ENCODE measurements at regions of chr17 and their contacts with region 1.

Region 1: GRCh38 chr17:82297714-82298537 is 19.5 kb downstream of the CD7 start:
- DNase-seq: peak; percentile 71 to 90
- ATAC-seq: peak; percentile 62 to 65
- H3K4me3 ChIP-seq: peak overlapping the region; percentile 49 to 62 (median 56)
- H3K27ac ChIP-seq: peak overlapping the region; percentile 84 to 98 (median 93)
- H3K4me1 ChIP-seq: peaks cover 40 to 44% of the 10 kb centered on the region in 2 donors
- H3K27me3 ChIP-seq: no peaks in the 10 kb centered on the region
- CTCF ChIP-seq: peak in 1 of 5 experiments; percentile 7
- POLR2A ChIP-seq: peak; percentile 75 to 76

Region 2: GRCh38 chr17:81941790-81942553 is 356.0 kb before region 1 on chr17:
- in situ Hi-C with region 1: no loop called
- intact Hi-C with region 1: loop called (anchors 5 kb)
- DNase-seq: peak; percentile 73 to 93
- ATAC-seq: peak; percentile 69 to 71
- H3K4me3 ChIP-seq: peak overlapping the region; percentile 44 to 56 (median 48)
- H3K27ac ChIP-seq: peak overlapping the region; percentile 90 to 98 (median 94)
- H3K4me1 ChIP-seq: peaks cover 26 to 44% of the 10 kb centered on the region in 2 donors
- H3K27me3 ChIP-seq: no peaks in the 10 kb centered on the region
- CTCF ChIP-seq: no peak
- POLR2A ChIP-seq: peak; percentile 86 to 90

Region 3: DNA sequence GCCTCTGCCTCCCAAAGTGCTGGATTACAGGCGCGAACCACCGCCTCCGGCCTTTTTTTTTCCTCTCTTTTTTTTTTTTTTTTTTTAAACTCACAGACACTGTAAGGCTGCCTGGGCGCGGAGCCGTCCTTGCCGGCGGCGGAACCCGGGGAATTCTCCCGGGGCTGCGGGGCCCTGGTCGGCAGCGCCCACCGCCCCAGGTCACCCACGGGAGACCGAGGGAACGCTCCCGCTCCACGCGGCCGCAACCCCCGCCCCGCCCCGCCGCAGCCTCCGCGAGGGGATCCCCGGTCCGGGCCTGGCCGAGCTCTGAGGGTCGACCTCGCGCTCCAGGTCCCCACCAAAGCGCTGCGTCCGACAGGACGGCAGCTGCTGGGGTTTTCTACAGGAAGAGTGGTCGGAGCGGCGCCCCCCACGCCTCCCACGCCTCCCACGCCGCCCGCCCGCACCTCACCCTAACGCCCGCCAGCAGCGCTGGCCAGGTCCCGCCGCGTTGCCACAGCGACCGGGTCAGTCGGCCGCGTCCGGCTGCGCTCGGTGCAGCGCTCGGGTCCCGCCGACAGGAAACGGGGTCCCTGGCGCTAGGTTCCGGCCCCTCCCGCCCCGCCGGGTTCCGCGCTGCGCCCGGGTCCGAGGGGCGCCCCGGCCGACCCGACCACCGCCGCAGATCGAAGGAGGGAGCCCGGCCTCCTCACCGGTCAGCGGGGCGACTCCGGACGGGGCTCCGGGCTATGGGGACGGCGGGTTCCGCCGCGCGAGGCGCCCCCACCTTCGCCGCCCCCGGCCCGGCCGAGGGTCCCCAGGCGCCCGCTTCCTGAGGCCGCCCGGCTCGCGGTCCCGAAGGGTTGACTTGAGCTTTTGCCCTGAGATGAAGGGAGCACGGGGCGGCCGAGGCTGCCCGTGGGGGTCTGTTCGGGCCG is 85.3 kb before region 1 on chr17 and contains the start of gene CCDC57:
- in situ Hi-C with region 1: no loop called
- intact Hi-C with region 1: loop called (anchors 1 kb)
- DNase-seq: peak; percentile 57 to 73
- ATAC-seq: peak; percentile 77 to 84
- H3K4me3 ChIP-seq: peak within 1 kb of the TSS; percentile 75 to 96 (median 88)
- H3K27ac ChIP-seq: peak within 1 kb of the TSS; percentile 73 to 93 (median 88)
- H3K4me1 ChIP-seq: peaks cover 17 to 19% of the 10 kb centered on the region in 2 donors
- H3K27me3 ChIP-seq: no peaks in the 10 kb centered on the region
- CTCF ChIP-seq: peak in 3 of 5 experiments; percentile 24 to 52 (median 31)
- POLR2A ChIP-seq: peak; percentile 58 to 83
- total RNA-seq, gene CCDC57: 3.7 to 11.3 (median 5.1) TPM

Region 4: DNA sequence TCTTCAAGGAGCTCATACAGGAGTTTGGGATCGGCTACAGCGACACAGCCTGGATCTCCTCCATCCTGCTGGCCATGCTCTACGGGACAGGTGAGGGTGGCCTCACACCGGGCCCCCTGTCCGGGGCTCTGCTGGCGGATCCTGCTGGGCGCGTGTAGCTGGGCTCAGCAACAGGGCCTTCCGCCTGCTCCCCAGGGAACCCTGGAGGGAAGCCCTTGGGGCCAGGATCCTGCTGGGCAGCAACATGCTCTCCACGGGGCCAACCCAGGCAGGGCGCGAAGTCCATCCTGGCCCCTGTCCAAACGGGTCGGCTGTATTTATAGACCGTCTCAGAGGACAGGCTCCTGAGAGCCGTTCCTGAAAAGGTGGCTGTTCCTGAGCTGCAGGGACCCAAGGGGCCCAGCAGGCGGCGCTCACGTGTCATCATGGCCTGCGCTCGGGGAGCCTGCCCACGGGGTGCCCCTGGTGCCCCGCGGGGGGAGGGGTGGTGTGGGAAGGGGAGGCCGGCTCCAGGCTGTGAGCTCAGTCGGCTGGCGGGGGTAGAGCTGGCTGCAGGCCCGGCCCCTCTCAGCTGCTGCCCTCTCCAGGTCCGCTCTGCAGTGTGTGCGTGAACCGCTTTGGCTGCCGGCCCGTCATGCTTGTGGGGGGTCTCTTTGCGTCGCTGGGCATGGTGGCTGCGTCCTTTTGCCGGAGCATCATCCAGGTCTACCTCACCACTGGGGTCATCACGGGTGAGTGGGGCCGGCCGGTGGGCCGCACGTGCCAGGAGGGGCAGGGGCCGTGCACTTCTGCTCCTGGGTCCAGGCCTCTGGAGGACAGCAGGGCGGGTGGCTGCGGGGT is 61.6 kb before region 1 on chr17:
- in situ Hi-C with region 1: no loop called
- intact Hi-C with region 1: loop called (anchors 1 kb)
- DNase-seq: peak; percentile 80 to 96
- ATAC-seq: peak; percentile 30 to 51
- H3K4me3 ChIP-seq: peak overlapping the region; percentile 25 to 58 (median 50)
- H3K27ac ChIP-seq: peak overlapping the region; percentile 90 to 98 (median 93)
- H3K4me1 ChIP-seq: peaks cover 81 to 95% of the 10 kb centered on the region in 2 donors
- H3K27me3 ChIP-seq: no peaks in the 10 kb centered on the region
- CTCF ChIP-seq: peak; percentile 94 to 99 (median 98)
- POLR2A ChIP-seq: no peak

Region 5: GRCh38 chr17:82267575-82268379 is 30.1 kb before region 1 on chr17:
- in situ Hi-C with region 1: no loop called
- intact Hi-C with region 1: loop called (anchors 1 kb)
- DNase-seq: peak; percentile 98 to 99
- ATAC-seq: peak; percentile 89 to 91
- H3K4me3 ChIP-seq: peak overlapping the region; percentile 5 to 37 (median 22)
- H3K27ac ChIP-seq: peak overlapping the region; percentile 99 to 100 (median 100)
- H3K4me1 ChIP-seq: peaks cover 61 to 63% of the 10 kb centered on the region in 2 donors
- H3K27me3 ChIP-seq: no peaks in the 10 kb centered on the region
- CTCF ChIP-seq: peak in 1 of 5 experiments; percentile 9
- POLR2A ChIP-seq: peak; percentile 13 to 49

Region 6: DNA sequence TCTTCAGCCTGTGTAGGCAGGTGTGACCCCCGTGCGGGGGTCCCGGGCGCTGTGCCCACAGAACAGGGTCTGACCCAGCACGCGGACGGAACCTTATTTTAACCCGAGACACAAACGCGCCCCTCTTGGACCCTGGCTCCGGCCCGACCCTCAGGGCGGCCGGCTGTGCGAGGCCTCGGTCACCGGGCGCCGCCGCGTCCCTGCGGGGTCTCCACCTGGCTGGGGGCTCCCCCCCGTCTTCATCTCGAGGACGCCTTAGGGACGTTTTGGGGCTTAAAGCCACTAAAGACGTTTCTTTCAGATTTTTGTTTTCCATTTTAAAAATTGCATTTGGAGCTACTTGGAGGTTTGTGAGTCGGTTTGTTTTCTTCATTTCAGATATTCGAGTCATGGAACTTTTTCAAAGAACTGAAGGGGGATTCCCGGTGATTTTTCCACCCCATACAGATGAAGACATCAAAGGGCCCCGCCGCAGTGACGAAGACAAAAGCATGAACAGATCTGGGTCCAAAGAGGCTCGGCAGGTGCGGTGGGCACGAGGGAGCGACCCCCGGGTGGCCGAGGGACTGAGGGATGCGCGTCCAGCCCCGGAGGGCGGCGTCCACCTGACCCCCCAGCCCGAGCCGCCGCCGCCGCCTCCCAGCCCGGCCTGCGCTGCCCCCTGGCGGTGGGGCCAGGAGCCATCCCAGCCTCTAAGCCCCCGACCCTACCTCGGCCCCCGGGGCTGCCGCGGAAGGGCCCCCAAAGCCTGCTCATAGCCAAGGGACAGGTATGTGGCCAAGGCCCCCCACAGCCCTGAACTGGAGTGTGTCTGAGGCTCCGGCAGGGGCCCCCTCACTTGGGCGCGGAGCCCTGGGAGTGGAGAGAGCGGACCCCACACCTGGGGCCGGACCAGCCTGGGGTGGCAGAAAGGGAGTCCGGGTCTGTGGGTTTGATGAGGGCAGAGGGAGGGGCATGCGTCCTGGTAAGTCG is 23.3 kb after region 1 on chr17:
- in situ Hi-C with region 1: no loop called
- intact Hi-C with region 1: loop called (anchors 1 kb)
- DNase-seq: no peak
- ATAC-seq: peak; percentile 38 to 69
- H3K4me3 ChIP-seq: no peak overlapping the region
- H3K27ac ChIP-seq: no peak overlapping the region
- H3K4me1 ChIP-seq: no peaks in the 10 kb centered on the region
- H3K27me3 ChIP-seq: peaks cover 0 to 2% (median 0%) of the 10 kb centered on the region in 3 donors
- CTCF ChIP-seq: peak; percentile 86 to 99 (median 99)
- POLR2A ChIP-seq: no peak

Measured in gastrocnemius medialis (tissue), 4 donors.